ENCODE measurements at regions of chr5 and their contacts with region 1.

Region 1: DNA sequence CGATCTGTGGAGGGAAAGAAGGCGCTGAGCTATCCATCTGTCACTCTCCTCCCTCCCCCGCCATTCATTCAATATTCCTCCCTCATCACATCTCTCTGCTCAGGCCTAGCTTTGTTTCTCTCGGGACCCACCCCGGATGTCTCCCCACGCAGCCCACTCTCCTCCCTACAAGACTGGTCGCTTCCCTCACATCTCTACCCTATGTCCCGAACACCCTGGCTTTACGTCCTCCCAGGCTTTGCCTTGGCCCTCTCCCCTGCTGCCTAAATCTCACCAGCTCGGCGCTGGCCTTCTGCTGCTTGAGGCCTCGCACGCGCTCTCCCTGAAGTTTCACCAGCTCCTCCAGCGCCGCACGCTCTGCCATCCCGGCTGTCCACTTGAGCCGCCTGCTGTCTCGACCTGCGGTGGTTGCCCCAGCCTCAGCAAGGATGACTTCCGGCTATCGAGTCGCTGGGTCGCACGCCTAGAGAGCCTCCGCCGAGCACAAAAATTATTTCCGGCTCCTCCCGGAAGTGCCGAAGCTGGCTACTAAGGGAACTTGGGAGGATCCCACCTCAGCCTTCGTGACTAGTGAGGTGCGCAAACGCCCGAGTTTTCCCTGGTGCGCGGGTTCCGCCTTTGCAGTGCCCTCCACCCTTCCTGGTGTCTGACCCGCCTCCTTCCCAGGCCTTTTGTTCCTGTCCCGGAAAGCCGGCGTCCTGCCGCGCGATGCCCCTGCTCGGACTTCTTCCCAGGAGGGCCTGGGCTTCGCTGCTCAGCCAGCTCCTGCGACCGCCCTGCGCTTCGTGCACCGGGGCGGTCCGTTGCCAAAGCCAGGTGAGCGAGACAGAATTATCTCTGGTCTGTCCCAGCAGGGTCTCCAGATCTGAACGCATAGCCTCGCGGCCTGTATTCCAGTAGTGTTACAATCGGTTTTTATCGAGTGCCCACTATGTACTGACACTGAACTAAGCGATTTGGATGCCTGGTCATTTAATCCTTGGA is at the starts of genes HARS1 and HARS2:
- DNase-seq: peak; percentile 94
- ATAC-seq: peak; percentile 98
- H3K4me3 ChIP-seq: peak within 1 kb of the TSS; percentile 82 to 98 (median 87)
- H3K27ac ChIP-seq: peak within 1 kb of the TSS; percentile 84
- H3K4me1 ChIP-seq: peaks cover 28% of the 10 kb centered on the region
- H3K27me3 ChIP-seq: no peaks in the 10 kb centered on the region; a peak in 1 of 5 replicates
- CTCF ChIP-seq: peak; percentile 47
- EP300 ChIP-seq: peak in 1 of 2 experiments; percentile 34; a peak in 1 of 4 replicates
- POLR2A ChIP-seq: peak; percentile 82 to 96
- RAD21 ChIP-seq: no peak
- total RNA-seq, gene HARS1: 66.2 and 78.8 TPM in 2 replicates
- total RNA-seq, gene HARS2: 25.8 and 28.3 TPM in 2 replicates

Region 2: DNA sequence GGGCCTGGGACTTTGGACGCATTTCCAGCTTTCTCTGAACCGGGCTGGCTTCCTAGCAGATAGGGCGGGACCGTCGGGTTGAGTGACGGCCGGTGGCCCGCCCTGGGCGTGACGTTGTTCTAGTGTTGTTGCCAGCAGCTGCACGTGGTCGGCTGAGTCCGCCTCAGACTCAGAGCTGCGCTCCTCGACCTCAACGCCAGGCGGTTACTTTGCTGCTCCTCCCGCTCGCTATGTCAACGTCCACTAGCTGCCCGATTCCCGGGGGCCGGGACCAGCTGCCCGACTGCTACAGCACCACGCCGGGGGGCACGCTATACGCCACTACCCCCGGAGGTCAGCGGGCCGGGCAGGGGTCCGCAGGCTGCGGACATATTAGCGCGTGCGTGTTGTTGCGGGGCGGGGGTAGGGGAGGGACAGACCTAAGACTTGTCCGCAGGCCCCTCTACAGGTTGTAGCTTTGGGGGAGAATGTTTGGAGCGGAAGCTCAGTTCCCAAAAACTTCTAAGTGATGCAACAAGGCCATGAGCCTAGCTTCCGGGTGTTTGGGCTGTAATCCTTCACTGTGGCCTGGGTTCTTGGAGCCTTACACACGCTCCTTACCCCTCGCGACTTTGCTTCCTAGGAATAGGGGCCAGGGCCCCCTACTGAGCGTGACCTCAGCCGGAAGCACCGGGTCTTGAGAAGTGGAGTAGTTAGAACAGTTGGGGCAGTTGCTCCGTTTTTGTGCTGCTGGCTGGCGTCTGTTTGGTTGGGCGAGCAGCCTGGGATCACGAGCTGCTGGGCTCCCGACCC is 143.5 kb before region 1 on chr5 and contains the start of gene EIF4EBP3:
- CTCF ChIA-PET with region 1: no interaction called
- POLR2A ChIA-PET with region 1: interaction called, 6 read pairs
- in situ Hi-C with region 1: no loop called
- intact Hi-C with region 1: loop called (anchors 1 kb)
- DNase-seq: peak; percentile 94
- ATAC-seq: peak; percentile 94
- H3K4me3 ChIP-seq: peak within 1 kb of the TSS; percentile 21 to 69 (median 48); a peak in 5 of 6 replicates
- H3K27ac ChIP-seq: peak within 1 kb of the TSS; percentile 86
- H3K4me1 ChIP-seq: peaks cover 27% of the 10 kb centered on the region
- H3K27me3 ChIP-seq: no peaks in the 10 kb centered on the region
- CTCF ChIP-seq: peak; percentile 62
- EP300 ChIP-seq: no peak
- POLR2A ChIP-seq: peak; percentile 3 to 58
- RAD21 ChIP-seq: peak; percentile 73
- total RNA-seq, gene EIF4EBP3: 1.7 and 1.9 TPM in 2 replicates

Region 3: DNA sequence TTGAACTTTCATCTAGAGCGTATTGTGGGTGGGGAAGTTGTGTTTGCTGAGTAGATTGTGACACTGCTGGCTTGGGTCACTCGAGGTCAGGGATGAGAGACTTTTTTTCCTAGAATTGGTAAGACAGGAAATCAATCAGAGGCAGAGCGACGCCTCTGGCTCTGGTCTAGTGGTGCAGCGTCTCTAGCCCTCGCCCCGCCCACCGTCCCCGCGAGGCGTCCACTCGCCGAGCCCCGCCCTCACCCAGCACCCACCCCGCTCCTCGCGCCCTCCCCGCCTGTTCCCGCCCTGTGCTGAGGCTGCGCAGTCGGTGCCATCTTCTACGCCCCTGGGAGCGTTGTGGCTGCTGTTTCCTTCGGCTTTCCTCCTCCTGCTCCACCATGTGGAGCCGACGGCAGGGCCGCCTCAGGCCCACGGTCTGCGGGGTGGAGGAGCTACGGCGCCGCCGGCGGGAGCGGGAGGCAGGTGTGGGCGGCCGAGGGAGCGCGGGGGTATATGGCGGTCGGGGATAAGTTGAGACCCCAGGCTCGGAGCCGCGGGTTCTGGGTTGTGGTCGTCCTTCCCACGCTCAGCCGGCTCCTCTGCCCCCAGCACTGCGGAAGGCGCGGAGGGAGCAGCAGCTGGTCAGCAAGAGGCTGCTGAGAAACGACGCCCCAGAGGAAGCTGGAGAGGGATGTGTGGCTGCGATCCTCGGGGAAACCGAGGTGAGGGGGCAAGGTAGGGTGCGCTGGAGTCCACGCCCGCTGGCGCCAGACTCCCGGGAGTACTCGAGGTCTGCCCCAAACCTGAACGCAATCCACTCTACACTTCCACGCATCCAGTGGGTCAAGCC is 51.9 kb before region 1 on chr5 and contains the start of gene TMCO6:
- CTCF ChIA-PET with region 1: no interaction called
- POLR2A ChIA-PET with region 1: interaction called, 11 read pairs
- in situ Hi-C with region 1: no loop called
- intact Hi-C with region 1: loop called (anchors 2 kb)
- DNase-seq: peak; percentile 99
- ATAC-seq: peak; percentile 90
- H3K4me3 ChIP-seq: peak within 1 kb of the TSS; percentile 67 to 89 (median 71)
- H3K27ac ChIP-seq: peak within 1 kb of the TSS; percentile 94
- H3K4me1 ChIP-seq: peaks cover 67% of the 10 kb centered on the region
- H3K27me3 ChIP-seq: no peaks in the 10 kb centered on the region
- CTCF ChIP-seq: peak; percentile 82
- EP300 ChIP-seq: peak; percentile 86 to 94; a peak in 3 of 4 replicates
- POLR2A ChIP-seq: peak in 1 of 2 experiments; percentile 90; a peak in 3 of 4 replicates
- RAD21 ChIP-seq: peak; percentile 66; the same call in 1 of the 2 replicates
- total RNA-seq, gene TMCO6: 8.2 and 16.6 TPM in 2 replicates

Region 4: GRCh38 chr5:140664359-140665119 is 26.7 kb before region 1 on chr5 and contains the start of gene WDR55:
- CTCF ChIA-PET with region 1: no interaction called
- POLR2A ChIA-PET with region 1: interaction called, 14 read pairs
- in situ Hi-C with region 1: no loop called
- intact Hi-C with region 1: loop called (anchors 1 kb)
- DNase-seq: peak; percentile 90
- ATAC-seq: peak; percentile 99
- H3K4me3 ChIP-seq: peak within 1 kb of the TSS; percentile 75 to 100 (median 91)
- H3K27ac ChIP-seq: peak within 1 kb of the TSS; percentile 76
- H3K4me1 ChIP-seq: peaks cover 28% of the 10 kb centered on the region
- H3K27me3 ChIP-seq: no peaks in the 10 kb centered on the region; a peak in 1 of 5 replicates
- CTCF ChIP-seq: no peak; the same call in none of the 2 replicates
- EP300 ChIP-seq: peak in 1 of 2 experiments; percentile 19; a peak in 1 of 4 replicates
- POLR2A ChIP-seq: peak; percentile 81 to 97
- RAD21 ChIP-seq: peak; percentile 55
- total RNA-seq, gene WDR55: 18.2 and 18.5 TPM in 2 replicates

Region 5: DNA sequence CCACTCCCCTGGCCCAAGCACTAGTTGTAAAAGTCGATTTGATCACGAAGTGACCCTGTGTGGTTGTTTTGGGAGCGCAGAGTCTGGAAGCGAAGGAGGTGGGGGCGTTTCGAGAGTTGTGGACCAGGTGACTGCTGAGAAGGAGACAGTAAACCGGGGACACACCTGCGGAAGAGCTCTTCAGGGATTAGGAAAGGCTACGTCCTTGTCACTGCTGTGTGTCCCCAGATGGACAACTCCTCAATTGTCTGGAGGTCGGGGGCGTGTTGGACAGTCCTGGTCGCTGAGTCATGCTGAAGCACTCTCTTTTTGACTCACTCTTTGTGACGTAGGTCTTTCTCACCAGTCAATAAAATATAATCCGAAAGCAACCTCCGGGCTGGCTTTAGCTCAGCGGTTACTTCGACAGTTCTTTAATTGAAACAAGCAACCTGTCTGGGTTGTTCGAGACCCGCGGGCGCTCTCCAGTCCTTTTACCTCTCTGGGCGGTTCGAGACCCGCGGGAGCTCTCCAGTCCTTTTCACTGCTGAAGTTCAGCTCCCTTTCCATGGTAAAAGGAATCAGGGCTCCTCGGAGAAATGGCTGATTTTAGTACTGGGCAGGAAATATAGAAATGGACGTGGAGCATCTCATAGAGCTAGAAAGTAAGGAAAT is 19.8 kb after region 1 on chr5:
- CTCF ChIA-PET with region 1: no interaction called
- POLR2A ChIA-PET with region 1: interaction called, 28 read pairs
- in situ Hi-C with region 1: no loop called
- intact Hi-C with region 1: no loop called
- DNase-seq: peak; percentile 98
- ATAC-seq: peak; percentile 94
- H3K4me3 ChIP-seq: peak overlapping the region; percentile 59 to 86 (median 77)
- H3K27ac ChIP-seq: peak overlapping the region; percentile 92
- H3K4me1 ChIP-seq: peaks cover 24% of the 10 kb centered on the region
- H3K27me3 ChIP-seq: no peaks in the 10 kb centered on the region; a peak in 1 of 5 replicates
- CTCF ChIP-seq: no peak
- EP300 ChIP-seq: peak in 1 of 2 experiments; percentile 47; a peak in 1 of 4 replicates
- POLR2A ChIP-seq: peak; percentile 48 to 82
- RAD21 ChIP-seq: 0 out of 2 replicates have a peak, but pooled peaks have one; percentile 7

Region 6: GRCh38 chr5:140718241-140718580 is 27.0 kb after region 1 on chr5:
- CTCF ChIA-PET with region 1: no interaction called
- POLR2A ChIA-PET with region 1: interaction called, 18 read pairs
- in situ Hi-C with region 1: no loop called
- intact Hi-C with region 1: loop called (anchors 2 kb)
- DNase-seq: no peak
- ATAC-seq: peak; percentile 2; the same call in 2 of the 3 replicates
- H3K4me3 ChIP-seq: peak overlapping the region; percentile 23 to 64 (median 60); a peak in 5 of 6 replicates
- H3K27ac ChIP-seq: peak overlapping the region; percentile 79
- H3K4me1 ChIP-seq: peaks cover 16% of the 10 kb centered on the region
- H3K27me3 ChIP-seq: no peaks in the 10 kb centered on the region
- CTCF ChIP-seq: no peak
- EP300 ChIP-seq: no peak
- POLR2A ChIP-seq: no peak; a peak in 1 of 4 replicates
- RAD21 ChIP-seq: no peak

Region 7: GRCh38 chr5:140741967-140742366 is 50.7 kb after region 1 on chr5:
- CTCF ChIA-PET with region 1: no interaction called
- POLR2A ChIA-PET with region 1: no interaction called
- in situ Hi-C with region 1: no loop called
- intact Hi-C with region 1: no loop called
- DNase-seq: no peak
- ATAC-seq: no peak
- H3K4me3 ChIP-seq: no peak overlapping the region
- H3K27ac ChIP-seq: no peak overlapping the region
- H3K4me1 ChIP-seq: no peaks in the 10 kb centered on the region
- H3K27me3 ChIP-seq: no peaks in the 10 kb centered on the region
- CTCF ChIP-seq: no peak
- EP300 ChIP-seq: no peak
- POLR2A ChIP-seq: no peak
- RAD21 ChIP-seq: no peak

Region 8: DNA sequence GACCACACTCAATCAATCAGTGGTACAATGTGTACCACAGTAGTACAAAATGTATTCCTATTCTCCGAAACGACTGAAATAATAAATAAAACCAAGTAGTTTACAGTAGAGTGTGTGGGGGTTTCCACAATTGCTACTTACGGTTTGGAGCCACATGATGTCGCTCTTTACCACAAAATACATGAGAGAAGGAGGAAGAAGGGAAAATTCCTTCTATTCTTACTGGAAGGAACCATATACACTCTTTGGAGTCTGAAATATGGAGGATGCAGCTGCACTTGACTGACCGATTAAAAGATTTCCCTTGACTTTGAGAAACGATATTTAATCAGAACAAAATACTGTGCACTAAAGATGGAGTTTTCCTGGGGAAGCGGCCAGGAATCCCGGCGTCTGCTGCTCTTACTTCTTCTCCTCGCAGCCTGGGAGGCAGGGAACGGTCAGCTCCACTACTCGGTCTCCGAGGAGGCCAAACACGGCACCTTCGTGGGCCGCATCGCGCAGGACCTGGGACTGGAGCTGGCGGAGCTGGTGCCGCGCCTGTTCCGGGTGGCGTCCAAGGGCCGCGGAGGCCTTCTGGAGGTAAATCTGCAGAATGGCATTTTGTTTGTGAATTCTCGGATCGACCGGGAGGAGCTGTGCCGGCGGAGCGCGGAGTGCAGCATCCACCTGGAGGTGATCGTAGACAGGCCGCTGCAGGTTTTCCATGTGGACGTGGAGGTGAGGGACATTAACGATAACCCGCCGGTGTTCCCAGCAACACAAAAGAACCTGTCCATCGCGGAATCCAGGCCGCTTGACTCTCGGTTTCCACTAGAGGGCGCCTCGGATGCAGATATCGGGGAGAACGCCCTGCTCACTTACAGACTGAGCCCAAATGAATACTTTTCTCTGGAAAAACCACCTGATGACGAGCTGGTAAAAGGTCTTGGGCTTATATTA is 115.9 kb after region 1 on chr5 and contains the start of gene PCDHA4:
- CTCF ChIA-PET with region 1: no interaction called
- POLR2A ChIA-PET with region 1: no interaction called
- in situ Hi-C with region 1: no loop called
- intact Hi-C with region 1: no loop called
- DNase-seq: peak; percentile 9
- ATAC-seq: peak; percentile 74
- H3K4me3 ChIP-seq: no peak within 1 kb of the TSS
- H3K27ac ChIP-seq: no peak within 1 kb of the TSS
- H3K4me1 ChIP-seq: no peaks in the 10 kb centered on the region
- H3K27me3 ChIP-seq: no peaks in the 10 kb centered on the region; a peak in 1 of 5 replicates
- CTCF ChIP-seq: peak; percentile 39
- EP300 ChIP-seq: no peak
- POLR2A ChIP-seq: no peak
- RAD21 ChIP-seq: no peak
- total RNA-seq, gene PCDHA4: not detected in 2 replicates